A673 (cell line): ENCODE measurements at regions of chr6 and their contacts with region 1.

Region 1: DNA sequence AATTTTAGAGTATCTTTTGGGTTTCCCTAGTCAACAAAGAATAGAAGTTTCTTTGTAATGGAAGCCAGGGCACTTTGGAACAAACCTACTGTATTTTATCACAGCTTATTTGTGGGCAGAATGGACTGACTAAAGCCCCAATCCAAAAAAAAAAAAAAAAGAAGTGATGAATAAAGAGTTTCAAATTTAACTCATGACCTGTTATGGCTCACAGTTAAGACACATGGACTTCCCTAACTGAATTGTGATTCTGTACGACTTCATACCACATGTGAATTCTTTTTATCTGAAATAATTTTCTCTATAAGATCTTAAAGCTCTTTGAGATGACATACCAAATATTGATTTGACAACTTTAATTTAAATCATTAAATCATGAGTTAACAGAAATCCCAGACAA is 77.2 kb downstream of the FILIP1 start:
- DNase-seq: no peak
- H3K4me3 ChIP-seq: no peak overlapping the region
- H3K27ac ChIP-seq: no peak overlapping the region
- H3K4me1 ChIP-seq: peaks cover 16% of the 10 kb centered on the region
- H3K27me3 ChIP-seq: no peaks in the 10 kb centered on the region
- CTCF ChIP-seq: no peak

Region 2: GRCh38 chr6:75326557-75327258 is 89.7 kb before region 1 on chr6:
- CTCF ChIA-PET with region 1: no interaction called
- POLR2A ChIA-PET with region 1: interaction called, 10 read pairs
- intact Hi-C with region 1: no loop called
- DNase-seq: no peak
- H3K4me3 ChIP-seq: no peak overlapping the region
- H3K27ac ChIP-seq: no peak overlapping the region
- H3K4me1 ChIP-seq: no peaks in the 10 kb centered on the region
- H3K27me3 ChIP-seq: no peaks in the 10 kb centered on the region
- CTCF ChIP-seq: no peak

Region 3: GRCh38 chr6:75493400-75494064 is 77.1 kb after region 1 on chr6 and contains the start of gene FILIP1:
- CTCF ChIA-PET with region 1: no interaction called
- POLR2A ChIA-PET with region 1: interaction called, 12 read pairs
- intact Hi-C with region 1: no loop called
- DNase-seq: peak; percentile 24
- H3K4me3 ChIP-seq: no peak within 1 kb of the TSS
- H3K27ac ChIP-seq: no peak within 1 kb of the TSS
- H3K4me1 ChIP-seq: peaks cover 34% of the 10 kb centered on the region
- H3K27me3 ChIP-seq: no peaks in the 10 kb centered on the region
- CTCF ChIP-seq: no peak
- total RNA-seq, gene FILIP1: 0.24 and 0.32 TPM in 2 replicates